ENCODE measurements at regions of chrX and their contacts with region 1.

Region 1: GRCh38 chrX:140918407-140919038 is 83.9 kb upstream of the SPANXB1 start:
- DNase-seq: peak in 7 of 9 donors; percentile 11 to 52 (median 39)
- ATAC-seq: peak; percentile 82
- H3K4me3 ChIP-seq: no peak overlapping the region
- H3K4me3 Mint-ChIP-seq: no peak overlapping the region
- H3K27ac ChIP-seq: no peak overlapping the region
- H3K27ac Mint-ChIP-seq: peak overlapping the region in 1 of 9 donors; percentile 84
- H3K4me1 ChIP-seq: no peaks in the 10 kb centered on the region
- H3K4me1 Mint-ChIP-seq: peaks cover 0 to 16% (median 6%) of the 10 kb centered on the region in 7 donors
- H3K27me3 ChIP-seq: no peaks in the 10 kb centered on the region
- H3K27me3 Mint-ChIP-seq: no peaks in the 10 kb centered on the region

Region 2: GRCh38 chrX:141176586-141177451 is 258.3 kb after region 1 on chrX and contains the start of gene LDOC1:
- CTCF ChIA-PET with region 1: no interaction called
- POLR2A ChIA-PET with region 1: no interaction called
- intact Hi-C with region 1: loop called in 1 of 2 experiments (anchors 10 kb)
- DNase-seq: peak; percentile 34 to 70 (median 58)
- ATAC-seq: peak; percentile 97
- H3K4me3 ChIP-seq: peak within 1 kb of the TSS; percentile 55
- H3K4me3 Mint-ChIP-seq: peak within 1 kb of the TSS; percentile 74 to 85 (median 82)
- H3K27ac ChIP-seq: peak within 1 kb of the TSS; percentile 55
- H3K27ac Mint-ChIP-seq: peak within 1 kb of the TSS in 8 of 9 donors; percentile 22 to 72 (median 65)
- H3K4me1 ChIP-seq: peaks cover 0 to 5% of the 10 kb centered on the region in 2 donors
- H3K4me1 Mint-ChIP-seq: peaks cover 0 to 18% (median 8%) of the 10 kb centered on the region in 7 donors
- H3K27me3 ChIP-seq: no peaks in the 10 kb centered on the region
- H3K27me3 Mint-ChIP-seq: peaks cover 0 to 4% (median 0%) of the 10 kb centered on the region in 5 donors
- total RNA-seq, gene LDOC1: 7.0 to 14.4 (median 11.8) TPM

Region 3: GRCh38 chrX:141278302-141278701 is 359.8 kb after region 1 on chrX:
- CTCF ChIA-PET with region 1: no interaction called
- POLR2A ChIA-PET with region 1: no interaction called
- intact Hi-C with region 1: loop called in 1 of 2 experiments (anchors 2 kb)
- DNase-seq: no peak
- ATAC-seq: no peak
- H3K4me3 ChIP-seq: no peak overlapping the region
- H3K4me3 Mint-ChIP-seq: no peak overlapping the region
- H3K27ac ChIP-seq: no peak overlapping the region
- H3K27ac Mint-ChIP-seq: no peak overlapping the region
- H3K4me1 ChIP-seq: no peaks in the 10 kb centered on the region
- H3K4me1 Mint-ChIP-seq: no peaks in the 10 kb centered on the region
- H3K27me3 ChIP-seq: no peaks in the 10 kb centered on the region
- H3K27me3 Mint-ChIP-seq: no peaks in the 10 kb centered on the region